ENCODE measurements at regions of chr7 and their contacts with region 1.

Region 1: DNA sequence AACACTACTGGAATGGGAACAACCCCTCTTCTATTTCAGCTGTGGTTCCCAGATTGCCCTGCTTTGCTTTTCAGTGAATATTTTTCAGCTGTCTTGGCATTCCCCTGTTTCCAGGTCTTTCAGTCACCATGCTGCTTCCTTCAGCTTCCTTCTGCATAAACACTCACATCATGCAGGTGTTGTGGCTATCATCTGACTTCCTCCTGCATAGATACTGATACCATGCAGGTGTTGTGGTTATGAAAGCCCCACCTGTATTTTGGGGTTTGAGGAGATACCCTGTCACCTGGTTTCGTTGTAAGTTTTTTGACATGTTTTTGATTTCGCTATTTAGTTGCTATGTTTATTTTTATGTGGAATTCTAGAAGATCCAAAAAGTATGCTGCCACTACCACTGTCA is 71.5 kb downstream of the SLC35B4 start:
- DNase-seq: peak; percentile 94
- H3K4me3 ChIP-seq: peak overlapping the region; percentile 44
- H3K27ac ChIP-seq: peak overlapping the region; percentile 74
- H3K4me1 ChIP-seq: peaks cover 41% of the 10 kb centered on the region
- CTCF ChIP-seq: no peak

Region 2: GRCh38 chr7:134044682-134045081 is 200.6 kb before region 1 on chr7:
- CTCF ChIA-PET with region 1: no interaction called
- POLR2A ChIA-PET with region 1: interaction called, 5 read pairs
- intact Hi-C with region 1: loop called (anchors 1 kb)
- DNase-seq: no peak
- H3K4me3 ChIP-seq: no peak overlapping the region
- H3K27ac ChIP-seq: peak overlapping the region; percentile 89
- H3K4me1 ChIP-seq: peaks cover 74% of the 10 kb centered on the region
- CTCF ChIP-seq: no peak

Region 3: DNA sequence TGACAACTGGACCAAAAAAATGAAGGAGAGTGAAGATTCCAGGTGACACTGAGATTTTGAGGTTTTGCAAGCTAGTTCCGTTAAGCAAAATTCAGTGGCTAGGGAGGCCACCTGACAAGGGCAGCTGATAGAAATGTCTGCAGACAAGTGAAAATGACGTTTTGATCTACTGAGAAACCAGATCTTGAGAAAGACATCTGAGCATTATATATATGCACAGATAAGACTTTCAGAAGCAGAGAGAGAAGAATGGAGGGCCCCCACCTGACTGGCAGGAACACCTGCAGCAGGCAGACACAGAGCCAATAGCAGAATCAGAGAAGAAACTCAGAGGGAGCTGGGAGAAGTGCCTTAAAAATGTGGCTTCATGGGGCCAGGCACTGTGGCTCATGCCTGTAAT is 194.2 kb before region 1 on chr7:
- CTCF ChIA-PET with region 1: no interaction called
- POLR2A ChIA-PET with region 1: interaction called, 5 read pairs
- intact Hi-C with region 1: loop called (anchors 1 kb)
- DNase-seq: peak; percentile 71
- H3K4me3 ChIP-seq: no peak overlapping the region
- H3K27ac ChIP-seq: peak overlapping the region; percentile 83
- H3K4me1 ChIP-seq: peaks cover 64% of the 10 kb centered on the region
- CTCF ChIP-seq: no peak

Region 4: GRCh38 chr7:134084488-134085144 is 160.6 kb before region 1 on chr7:
- CTCF ChIA-PET with region 1: no interaction called
- POLR2A ChIA-PET with region 1: no interaction called
- intact Hi-C with region 1: loop called (anchors 5 kb)
- DNase-seq: peak; percentile 79
- H3K4me3 ChIP-seq: no peak overlapping the region
- H3K27ac ChIP-seq: peak overlapping the region; percentile 47
- H3K4me1 ChIP-seq: peaks cover 20% of the 10 kb centered on the region
- CTCF ChIP-seq: peak; percentile 39; the same call in 1 of the 2 replicates

Region 5: GRCh38 chr7:134154581-134155130 is 90.6 kb before region 1 on chr7:
- CTCF ChIA-PET with region 1: no interaction called
- POLR2A ChIA-PET with region 1: no interaction called
- intact Hi-C with region 1: no loop called
- DNase-seq: no peak
- H3K4me3 ChIP-seq: no peak overlapping the region
- H3K27ac ChIP-seq: no peak overlapping the region
- H3K4me1 ChIP-seq: no peaks in the 10 kb centered on the region
- CTCF ChIP-seq: no peak

Region 6: GRCh38 chr7:134293002-134293740 is 47.9 kb after region 1 on chr7:
- CTCF ChIA-PET with region 1: no interaction called
- POLR2A ChIA-PET with region 1: no interaction called
- intact Hi-C with region 1: loop called (anchors 1 kb)
- DNase-seq: peak; percentile 96
- H3K4me3 ChIP-seq: peak overlapping the region; percentile 41
- H3K27ac ChIP-seq: peak overlapping the region; percentile 60
- H3K4me1 ChIP-seq: peaks cover 26% of the 10 kb centered on the region
- CTCF ChIP-seq: no peak

Region 7: GRCh38 chr7:134316539-134317344 is 71.5 kb after region 1 on chr7 and contains the start of gene SLC35B4:
- CTCF ChIA-PET with region 1: interaction called, 4 read pairs
- POLR2A ChIA-PET with region 1: no interaction called
- intact Hi-C with region 1: loop called (anchors 2 kb)
- DNase-seq: peak; percentile 97
- H3K4me3 ChIP-seq: peak within 1 kb of the TSS; percentile 99
- H3K27ac ChIP-seq: peak within 1 kb of the TSS; percentile 9
- H3K4me1 ChIP-seq: peaks cover 14% of the 10 kb centered on the region
- CTCF ChIP-seq: peak; percentile 35
- total RNA-seq, gene SLC35B4: 36.5 and 38.1 TPM in 2 replicates

Region 8: DNA sequence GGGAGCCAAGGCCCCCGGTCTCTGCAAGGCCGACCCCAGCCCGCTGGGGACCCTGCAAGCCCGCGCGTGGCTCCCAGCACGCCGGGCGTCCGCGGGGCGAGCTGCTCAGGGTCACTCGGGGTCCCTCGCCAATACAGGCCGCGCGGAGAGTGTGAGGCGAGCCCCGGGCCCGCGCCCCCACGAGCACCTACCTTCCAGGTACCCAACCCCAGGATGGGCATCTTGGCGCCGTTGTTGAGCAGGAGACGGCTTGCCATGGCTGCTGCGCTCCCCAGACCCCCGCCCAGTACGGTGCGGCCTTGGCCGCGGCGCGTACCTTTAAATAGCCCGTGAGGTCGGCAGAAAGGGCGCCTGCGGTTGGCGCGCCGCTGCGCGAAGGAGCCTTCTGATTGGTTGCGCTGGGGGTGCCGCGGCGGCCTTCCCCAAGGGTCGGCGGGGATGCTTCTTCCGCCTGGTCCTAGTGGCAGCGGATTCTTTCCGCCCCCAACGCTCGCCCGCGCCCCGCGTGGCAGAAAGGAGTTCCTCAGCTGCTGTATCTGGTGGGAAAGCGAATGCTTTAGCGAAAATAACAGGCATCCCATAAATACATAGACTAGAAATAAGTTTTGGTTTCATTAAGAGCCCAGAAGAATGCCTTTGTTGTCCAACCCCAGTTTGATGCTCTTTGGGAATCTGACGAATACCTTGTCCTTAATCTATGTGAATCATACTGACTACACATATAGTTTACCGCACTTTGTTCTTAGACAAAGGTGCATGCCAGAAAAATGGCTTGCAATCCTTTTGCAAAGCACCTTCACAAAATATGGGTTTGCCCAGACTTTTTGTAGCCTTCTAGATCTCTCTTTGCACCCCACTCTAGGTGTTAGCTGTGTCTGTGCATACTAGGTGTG is 213.8 kb after region 1 on chr7 and contains the start of gene AKR1B1:
- CTCF ChIA-PET with region 1: no interaction called
- POLR2A ChIA-PET with region 1: interaction called, 4 read pairs
- intact Hi-C with region 1: loop called (anchors 5 kb)
- DNase-seq: peak; percentile 96
- H3K4me3 ChIP-seq: peak within 1 kb of the TSS; percentile 96
- H3K27ac ChIP-seq: peak within 1 kb of the TSS; percentile 57
- H3K4me1 ChIP-seq: peaks cover 29% of the 10 kb centered on the region
- CTCF ChIP-seq: peak; percentile 77
- total RNA-seq, gene AKR1B1: 66.4 and 75.7 TPM in 2 replicates

Measured in OCI-LY7 (cell line).